CD4-positive, alpha-beta memory T cell (primary cell): ENCODE measurements at regions of chr3 and their contacts with region 1.

Region 1: GRCh38 chr3:177538750-177539730 is 341.8 kb upstream of the TBL1XR1 start:
- DNase-seq: peak in 4 of 5 donors; percentile 48 to 59 (median 56)
- H3K4me3 ChIP-seq: peak overlapping the region in 1 of 2 donors; percentile 8
- H3K4me3 Mint-ChIP-seq: peak overlapping the region; percentile 55 to 87 (median 84)
- H3K27ac ChIP-seq: peak overlapping the region; percentile 36
- H3K27ac Mint-ChIP-seq: peak overlapping the region; percentile 79 to 93 (median 92)
- H3K4me1 ChIP-seq: peaks cover 46% of the 10 kb centered on the region
- H3K4me1 Mint-ChIP-seq: peaks cover 47 to 68% (median 55%) of the 10 kb centered on the region in 4 donors
- H3K27me3 ChIP-seq: no peaks in the 10 kb centered on the region
- H3K27me3 Mint-ChIP-seq: no peaks in the 10 kb centered on the region

Region 2: DNA sequence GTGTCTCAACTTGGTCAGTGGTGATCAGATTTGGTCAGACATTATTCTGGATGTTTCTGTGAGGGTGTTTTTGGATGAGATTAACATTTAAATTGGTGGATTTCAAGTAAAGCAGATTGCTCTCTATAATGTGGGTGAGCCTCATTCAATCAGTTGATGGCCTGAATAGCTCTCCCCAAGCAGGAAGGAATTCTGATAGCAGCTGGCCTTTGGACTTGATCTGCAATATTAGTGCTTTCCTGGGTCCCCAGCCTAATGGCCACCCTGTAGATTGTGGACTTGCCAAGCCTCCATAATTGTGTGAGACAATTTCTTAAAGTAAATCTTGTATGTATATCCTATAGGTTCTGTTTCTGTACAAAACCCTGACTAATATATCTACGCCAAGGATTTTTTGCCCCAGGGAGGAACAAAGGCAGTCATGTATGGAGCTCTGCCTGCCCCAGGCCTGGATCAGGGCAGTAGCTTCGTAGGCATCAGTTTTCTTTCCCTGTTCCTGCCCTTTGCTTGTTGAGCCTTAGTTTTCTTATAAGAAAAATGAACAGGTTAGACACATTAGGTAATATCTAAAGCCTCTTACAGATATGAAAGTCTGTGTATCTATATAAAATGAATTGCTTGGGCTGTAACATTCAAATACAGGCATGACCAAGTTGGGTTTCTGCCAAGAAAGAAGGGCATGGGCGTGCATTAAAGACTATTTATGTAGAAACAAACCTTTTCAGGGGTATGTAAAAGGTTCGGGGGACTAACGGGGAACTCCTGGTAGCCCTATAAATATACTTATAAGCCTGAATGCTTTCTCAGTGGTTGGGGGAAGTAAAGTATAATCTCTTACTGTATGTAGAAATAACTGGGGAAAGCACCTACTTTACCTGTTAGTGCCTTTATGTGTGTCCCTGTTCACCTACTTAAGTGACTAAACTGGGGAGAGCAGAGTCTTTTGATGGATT is 187.6 kb before region 1 on chr3:
- CTCF ChIA-PET with region 1: no interaction called
- POLR2A ChIA-PET with region 1: no interaction called
- intact Hi-C with region 1: no loop called
- DNase-seq: no peak
- H3K4me3 ChIP-seq: no peak overlapping the region
- H3K4me3 Mint-ChIP-seq: no peak overlapping the region
- H3K27ac ChIP-seq: no peak overlapping the region
- H3K27ac Mint-ChIP-seq: peak overlapping the region in 2 of 7 donors; percentile 2 to 4
- H3K4me1 ChIP-seq: peaks cover 5% of the 10 kb centered on the region
- H3K4me1 Mint-ChIP-seq: peaks cover 9 to 22% (median 10%) of the 10 kb centered on the region in 4 donors
- H3K27me3 ChIP-seq: no peaks in the 10 kb centered on the region
- H3K27me3 Mint-ChIP-seq: no peaks in the 10 kb centered on the region

Region 3: DNA sequence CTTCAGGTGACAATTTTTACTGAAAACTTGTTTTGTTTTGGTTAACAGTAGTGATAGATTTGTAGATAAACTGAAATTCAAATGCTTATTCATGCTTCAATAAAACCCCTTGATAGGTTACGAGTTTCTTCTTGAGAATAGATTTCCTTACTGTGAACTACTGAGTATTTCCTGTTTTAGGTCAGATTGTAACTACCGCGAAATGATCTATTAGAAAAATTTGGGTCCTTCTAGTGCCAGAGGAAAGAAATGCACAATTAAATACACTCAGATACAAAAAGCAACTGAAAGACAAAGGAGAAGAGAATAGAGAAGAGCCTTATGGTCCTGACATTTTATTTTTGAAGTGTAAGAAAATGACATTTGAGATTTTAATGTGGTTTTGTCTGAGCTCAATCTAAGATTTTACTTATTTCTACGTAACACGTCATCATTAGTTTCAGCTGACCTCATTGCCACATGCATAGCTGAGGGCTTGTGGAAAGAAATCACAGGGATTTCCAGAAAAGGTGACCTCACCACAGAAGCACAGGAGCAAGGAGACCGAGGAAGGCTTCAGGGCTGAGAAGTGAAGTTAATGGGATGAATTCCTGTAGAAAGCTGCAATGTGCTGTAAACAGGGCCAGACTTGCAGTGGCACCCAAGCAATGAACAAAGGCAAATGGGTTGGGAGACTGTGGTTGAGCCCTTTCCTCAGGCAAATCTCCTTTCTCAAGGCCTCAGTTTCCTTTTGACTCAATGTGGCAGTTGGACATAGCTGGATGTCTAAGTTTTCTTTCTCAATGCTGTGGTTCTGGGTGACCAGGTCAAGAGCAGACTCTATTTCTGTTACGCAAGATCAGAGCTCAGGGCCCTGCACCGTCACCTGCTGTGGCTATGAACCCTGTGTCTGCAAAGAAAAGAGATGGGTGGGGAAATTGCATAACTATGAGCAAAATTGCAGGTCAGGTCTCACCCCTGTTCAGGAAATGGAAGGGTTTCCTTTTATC is 89.8 kb before region 1 on chr3:
- CTCF ChIA-PET with region 1: no interaction called
- POLR2A ChIA-PET with region 1: interaction called, 11 read pairs
- intact Hi-C with region 1: no loop called
- DNase-seq: peak; percentile 19 to 49 (median 23)
- H3K4me3 ChIP-seq: peak overlapping the region in 1 of 2 donors; percentile 6
- H3K4me3 Mint-ChIP-seq: peak overlapping the region; percentile 26 to 84 (median 70)
- H3K27ac ChIP-seq: no peak overlapping the region
- H3K27ac Mint-ChIP-seq: peak overlapping the region; percentile 67 to 93 (median 84)
- H3K4me1 ChIP-seq: peaks cover 23% of the 10 kb centered on the region
- H3K4me1 Mint-ChIP-seq: peaks cover 13 to 26% (median 19%) of the 10 kb centered on the region in 4 donors
- H3K27me3 ChIP-seq: no peaks in the 10 kb centered on the region
- H3K27me3 Mint-ChIP-seq: no peaks in the 10 kb centered on the region

Region 4: GRCh38 chr3:177521298-177521697 is 17.7 kb before region 1 on chr3:
- CTCF ChIA-PET with region 1: interaction called, 4 read pairs
- POLR2A ChIA-PET with region 1: interaction called, 22 read pairs
- intact Hi-C with region 1: no loop called
- DNase-seq: no peak
- H3K4me3 ChIP-seq: no peak overlapping the region
- H3K4me3 Mint-ChIP-seq: no peak overlapping the region
- H3K27ac ChIP-seq: no peak overlapping the region
- H3K27ac Mint-ChIP-seq: no peak overlapping the region
- H3K4me1 ChIP-seq: peaks cover 10% of the 10 kb centered on the region
- H3K4me1 Mint-ChIP-seq: peaks cover 13 to 35% (median 24%) of the 10 kb centered on the region in 4 donors
- H3K27me3 ChIP-seq: no peaks in the 10 kb centered on the region
- H3K27me3 Mint-ChIP-seq: no peaks in the 10 kb centered on the region

Region 5: DNA sequence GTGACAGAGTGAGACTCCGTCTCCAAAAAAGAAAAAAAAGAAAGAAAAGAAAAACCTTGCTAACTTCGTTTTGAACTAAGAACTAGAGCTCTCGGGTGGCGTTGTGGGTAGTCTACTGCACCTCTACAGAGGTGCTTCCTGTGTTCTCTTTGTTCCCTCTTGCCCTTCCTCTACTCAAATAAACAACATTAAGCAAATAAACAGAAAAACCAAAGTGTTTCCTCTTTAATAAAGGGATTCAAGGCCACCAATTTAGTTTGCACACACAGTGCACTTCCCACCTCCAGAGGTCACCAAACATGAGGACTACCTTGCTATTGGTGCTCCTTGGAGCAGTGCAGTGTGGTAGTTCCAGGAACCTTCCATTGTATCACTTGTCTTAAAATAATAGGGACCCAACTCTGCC is 12.4 kb after region 1 on chr3:
- CTCF ChIA-PET with region 1: interaction called, 4 read pairs
- POLR2A ChIA-PET with region 1: interaction called, 17 read pairs
- intact Hi-C with region 1: loop called (anchors 1 kb)
- DNase-seq: peak in 4 of 5 donors; percentile 16 to 22 (median 20)
- H3K4me3 ChIP-seq: no peak overlapping the region
- H3K4me3 Mint-ChIP-seq: peak overlapping the region in 7 of 8 donors; percentile 45 to 81 (median 73)
- H3K27ac ChIP-seq: no peak overlapping the region
- H3K27ac Mint-ChIP-seq: peak overlapping the region; percentile 45 to 95 (median 82)
- H3K4me1 ChIP-seq: peaks cover 63% of the 10 kb centered on the region
- H3K4me1 Mint-ChIP-seq: peaks cover 58 to 96% (median 73%) of the 10 kb centered on the region in 4 donors
- H3K27me3 ChIP-seq: no peaks in the 10 kb centered on the region
- H3K27me3 Mint-ChIP-seq: no peaks in the 10 kb centered on the region

Region 6: DNA sequence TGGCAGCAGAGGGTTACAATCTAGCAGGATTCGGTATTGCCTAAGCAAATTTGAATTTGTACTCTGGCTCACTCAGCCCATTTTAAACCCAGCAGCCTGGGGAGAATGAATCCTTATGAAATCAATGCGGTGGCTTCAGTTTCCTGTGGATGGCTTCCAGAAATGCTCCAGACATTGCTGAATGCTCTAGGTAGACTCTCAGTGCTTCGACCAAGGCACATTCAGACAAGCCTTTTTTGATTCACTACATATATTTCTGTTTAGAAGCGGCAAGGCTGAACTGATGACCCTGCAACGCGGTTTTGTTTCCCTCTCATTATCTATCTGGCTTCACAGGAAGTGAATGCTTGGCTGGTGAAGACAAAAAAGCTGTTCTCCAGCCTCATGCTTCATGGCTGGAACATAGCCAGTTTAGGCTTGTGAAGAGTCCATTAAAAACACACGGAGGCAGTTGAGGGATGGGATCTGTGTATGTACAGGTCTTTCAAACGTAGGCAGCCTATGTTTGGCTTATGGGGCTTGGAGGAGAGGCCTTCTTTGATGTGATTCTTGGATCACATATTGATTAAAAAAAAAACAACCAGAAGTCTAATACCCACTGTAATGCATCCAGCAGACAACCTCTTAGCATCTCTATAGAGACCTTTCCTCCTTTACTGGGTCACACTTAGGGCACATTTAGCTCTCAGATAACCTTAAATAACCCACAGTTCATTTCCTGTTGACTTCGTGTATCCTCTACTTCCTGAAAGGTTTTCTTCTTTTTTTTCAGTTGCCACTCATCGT is 58.5 kb after region 1 on chr3:
- CTCF ChIA-PET with region 1: no interaction called
- POLR2A ChIA-PET with region 1: interaction called, 24 read pairs
- intact Hi-C with region 1: loop called (anchors 5 kb)
- DNase-seq: peak; percentile 55 to 67 (median 57)
- H3K4me3 ChIP-seq: peak overlapping the region; percentile 18 to 49
- H3K4me3 Mint-ChIP-seq: peak overlapping the region; percentile 10 to 87 (median 77)
- H3K27ac ChIP-seq: peak overlapping the region; percentile 60
- H3K27ac Mint-ChIP-seq: peak overlapping the region; percentile 92 to 97 (median 95)
- H3K4me1 ChIP-seq: peaks cover 83% of the 10 kb centered on the region
- H3K4me1 Mint-ChIP-seq: peaks cover 67 to 90% (median 75%) of the 10 kb centered on the region in 4 donors
- H3K27me3 ChIP-seq: no peaks in the 10 kb centered on the region
- H3K27me3 Mint-ChIP-seq: no peaks in the 10 kb centered on the region

Region 7: GRCh38 chr3:177646749-177647148 is 107.7 kb after region 1 on chr3:
- CTCF ChIA-PET with region 1: interaction called, 3 read pairs
- POLR2A ChIA-PET with region 1: interaction called, 13 read pairs
- intact Hi-C with region 1: no loop called
- DNase-seq: peak; percentile 26 to 67 (median 38)
- H3K4me3 ChIP-seq: no peak overlapping the region
- H3K4me3 Mint-ChIP-seq: peak overlapping the region in 6 of 8 donors; percentile 37 to 82 (median 59)
- H3K27ac ChIP-seq: no peak overlapping the region
- H3K27ac Mint-ChIP-seq: peak overlapping the region; percentile 70 to 88 (median 80)
- H3K4me1 ChIP-seq: peaks cover 73% of the 10 kb centered on the region
- H3K4me1 Mint-ChIP-seq: peaks cover 55 to 70% (median 63%) of the 10 kb centered on the region in 4 donors
- H3K27me3 ChIP-seq: no peaks in the 10 kb centered on the region
- H3K27me3 Mint-ChIP-seq: no peaks in the 10 kb centered on the region